ENCODE measurements at regions of chr20 and their contacts with region 1.

Region 1: GRCh38 chr20:50491168-50491567 is 19.0 kb upstream of the PTPN1 start:
- DNase-seq: no peak
- ATAC-seq: no peak
- H3K4me3 ChIP-seq: no peak overlapping the region
- H3K27ac ChIP-seq: peak overlapping the region in 1 of 2 experiments; percentile 18; a peak in 1 of 6 replicates
- H3K4me1 ChIP-seq: peaks cover 15% of the 10 kb centered on the region
- CTCF ChIP-seq: no peak
- EP300 ChIP-seq: no peak
- POLR2A ChIP-seq: no peak
- RAD21 ChIP-seq: no peak

Region 2: DNA sequence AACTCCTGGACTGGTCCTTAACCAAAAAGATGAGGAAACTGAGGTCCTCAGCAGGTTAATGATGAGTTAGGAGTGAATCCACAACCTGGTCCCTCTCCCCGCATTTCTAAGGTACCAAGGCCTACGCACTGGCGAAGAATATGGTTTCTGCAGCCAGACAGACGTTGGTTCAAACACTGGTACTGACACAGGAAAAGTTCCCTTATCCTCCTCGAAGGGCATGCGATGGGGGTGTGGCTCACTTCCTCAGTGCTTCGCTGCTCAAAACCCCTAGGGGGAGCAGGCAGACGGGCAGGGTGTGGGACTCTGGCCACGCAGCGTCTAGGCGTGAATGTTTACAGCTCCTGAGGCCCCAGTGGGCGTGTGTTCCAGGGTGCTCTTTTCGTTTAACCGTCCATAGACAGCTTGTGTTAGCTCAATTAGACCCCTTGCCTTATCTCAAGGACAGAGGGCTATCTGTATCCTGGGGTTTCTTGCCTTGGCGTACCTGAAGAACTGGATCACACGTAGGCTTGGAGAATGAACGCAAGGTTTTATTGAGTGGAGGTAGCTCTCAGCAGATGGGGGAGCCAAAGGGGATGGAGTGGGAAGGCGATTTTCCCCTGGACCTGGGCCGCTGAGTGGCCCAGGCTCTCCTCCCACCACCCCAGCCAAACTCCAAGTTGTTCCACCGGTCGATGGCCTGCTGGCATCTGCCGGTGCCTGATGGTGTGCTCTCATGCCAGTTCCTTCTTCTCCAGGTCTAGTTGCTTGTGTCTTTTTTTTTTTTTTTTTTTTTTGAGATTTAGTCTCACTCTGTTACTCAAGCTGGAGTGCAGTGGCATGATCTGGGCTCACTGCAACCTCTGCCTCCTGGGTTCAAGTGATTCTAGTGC is 12.8 kb before region 1 on chr20:
- CTCF ChIA-PET with region 1: interaction called, 11 read pairs
- POLR2A ChIA-PET with region 1: no interaction called
- DNase-seq: peak; percentile 64 to 73
- ATAC-seq: peak; percentile 94 to 99
- H3K4me3 ChIP-seq: no peak overlapping the region
- H3K27ac ChIP-seq: 0 out of 6 replicates have a peak overlapping the region, but pooled peaks of 1 of the 2 experiments have one; percentile 11
- H3K4me1 ChIP-seq: peaks cover 21% of the 10 kb centered on the region
- CTCF ChIP-seq: peak; percentile 45
- EP300 ChIP-seq: no peak
- POLR2A ChIP-seq: no peak
- RAD21 ChIP-seq: peak; percentile 41 to 63; a peak in 3 of 5 replicates

Measured in A549 (cell line).